Activated T-helper 2 cell treated with anti-CD3 and anti-CD28 coated beads, Interferon-gamma antibody, Interleukin-2, Interleukin-4, amounts not matched to agents 10 μg/mL and 5 μg/mL and 100 μg/mL, durations not matched to agents 14 hours and 24 hours and 36 hours (primary cell): ENCODE measurements at regions of chr6 and their contacts with region 1.

Region 1: DNA sequence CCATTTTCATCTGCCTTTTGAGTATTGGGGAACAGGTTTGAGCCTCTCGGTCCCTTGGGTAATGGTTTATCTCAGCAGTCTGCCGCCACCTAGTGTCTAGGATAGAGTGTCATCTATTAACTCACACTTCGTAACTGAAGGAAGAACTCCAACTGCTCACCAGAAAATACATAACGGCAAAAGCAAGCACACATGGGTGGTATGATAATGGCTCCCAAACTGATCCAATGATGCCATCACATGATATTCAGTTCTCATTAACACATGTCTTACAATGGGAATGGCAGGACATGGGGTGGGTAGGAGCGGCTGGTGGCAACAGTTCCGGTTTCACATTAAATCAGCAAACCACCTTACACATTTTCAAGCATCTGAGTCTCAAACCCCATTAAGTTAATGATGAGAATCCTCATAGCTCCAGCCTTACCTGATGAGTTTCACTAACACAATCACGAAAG is 110.7 kb upstream of the PHACTR1 start:
- DNase-seq: peak; percentile 22
- H3K4me3 Mint-ChIP-seq: peak overlapping the region; percentile 38
- H3K27ac Mint-ChIP-seq: no peak overlapping the region
- H3K4me1 Mint-ChIP-seq: peaks cover 9% of the 10 kb centered on the region
- H3K27me3 Mint-ChIP-seq: peaks cover 10% of the 10 kb centered on the region

Region 2: DNA sequence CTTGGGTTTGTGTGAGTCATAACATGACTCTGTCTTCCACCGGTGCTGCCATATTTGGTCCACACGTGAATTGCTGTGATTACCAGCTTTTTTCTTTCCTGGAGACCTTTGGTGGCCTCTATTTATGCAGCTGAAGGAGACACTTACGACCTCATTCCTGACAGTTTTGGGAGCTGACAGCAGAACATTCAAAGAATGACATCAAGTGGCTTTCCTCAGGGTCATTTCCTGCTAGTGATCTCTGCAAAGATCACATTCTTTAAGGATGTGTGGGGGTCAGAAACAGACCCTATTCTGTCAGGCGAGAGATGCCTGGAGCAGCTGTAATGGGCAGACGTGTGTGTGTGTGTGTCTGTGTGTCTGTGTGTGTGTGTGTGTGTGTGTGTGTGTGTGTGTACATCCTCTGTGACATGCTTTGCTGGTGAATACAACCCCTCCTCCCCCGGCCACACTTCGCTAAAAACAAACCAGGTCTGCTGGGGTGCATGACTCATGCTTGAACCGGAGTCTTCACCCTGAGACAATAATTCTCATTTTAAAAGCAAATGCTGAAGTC is 952.8 kb before region 1 on chr6:
- intact Hi-C with region 1: loop called (anchors 5 kb)
- DNase-seq: peak; percentile 31
- H3K4me3 Mint-ChIP-seq: no peak overlapping the region
- H3K27ac Mint-ChIP-seq: no peak overlapping the region
- H3K4me1 Mint-ChIP-seq: peaks cover 11% of the 10 kb centered on the region
- H3K27me3 Mint-ChIP-seq: peaks cover 16% of the 10 kb centered on the region